CD8-positive, alpha-beta T cell (primary cell): ENCODE measurements at regions of chr5 and their contacts with region 1.

Region 1: GRCh38 chr5:140084541-140084940 is 29.4 kb upstream of the PURA start:
- DNase-seq: no peak
- ATAC-seq: no peak
- H3K4me3 ChIP-seq: no peak overlapping the region
- H3K4me3 Mint-ChIP-seq: no peak overlapping the region
- H3K27ac ChIP-seq: no peak overlapping the region
- H3K27ac Mint-ChIP-seq: no peak overlapping the region
- H3K4me1 ChIP-seq: no peaks in the 10 kb centered on the region
- H3K4me1 Mint-ChIP-seq: no peaks in the 10 kb centered on the region
- H3K27me3 ChIP-seq: no peaks in the 10 kb centered on the region
- H3K27me3 Mint-ChIP-seq: peaks cover 2% of the 10 kb centered on the region
- CTCF ChIP-seq: no peak

Region 2: GRCh38 chr5:140157032-140157803 is 72.7 kb after region 1 on chr5:
- CTCF ChIA-PET with region 1: interaction called, 26 read pairs
- POLR2A ChIA-PET with region 1: no interaction called
- intact Hi-C with region 1: no loop called
- DNase-seq: peak; percentile 74 to 91 (median 87)
- ATAC-seq: peak; percentile 100
- H3K4me3 ChIP-seq: no peak overlapping the region
- H3K4me3 Mint-ChIP-seq: peak overlapping the region; percentile 46
- H3K27ac ChIP-seq: no peak overlapping the region
- H3K27ac Mint-ChIP-seq: no peak overlapping the region
- H3K4me1 ChIP-seq: peaks cover 4% of the 10 kb centered on the region
- H3K4me1 Mint-ChIP-seq: peaks cover 6% of the 10 kb centered on the region
- H3K27me3 ChIP-seq: no peaks in the 10 kb centered on the region
- H3K27me3 Mint-ChIP-seq: peaks cover under 1% of the 10 kb centered on the region
- CTCF ChIP-seq: peak; percentile 81

Region 3: GRCh38 chr5:140996060-140996459 is 911.5 kb after region 1 on chr5:
- CTCF ChIA-PET with region 1: no interaction called
- POLR2A ChIA-PET with region 1: no interaction called
- intact Hi-C with region 1: no loop called
- DNase-seq: no peak
- ATAC-seq: no peak
- H3K4me3 ChIP-seq: no peak overlapping the region
- H3K4me3 Mint-ChIP-seq: no peak overlapping the region
- H3K27ac ChIP-seq: no peak overlapping the region
- H3K27ac Mint-ChIP-seq: no peak overlapping the region
- H3K4me1 ChIP-seq: no peaks in the 10 kb centered on the region
- H3K4me1 Mint-ChIP-seq: no peaks in the 10 kb centered on the region
- H3K27me3 ChIP-seq: peaks cover 0 to 3% of the 10 kb centered on the region in 2 experiments
- H3K27me3 Mint-ChIP-seq: peaks cover 14% of the 10 kb centered on the region
- CTCF ChIP-seq: no peak